Activated CD4-positive, alpha-beta memory T cell treated with anti-CD3 and anti-CD28 coated beads for 36 hours (primary cell): ENCODE measurements at regions of chr9 and their contacts with region 1.

Region 1: GRCh38 chr9:128361986-128362646 is 9.1 kb upstream of the URM1 start:
- DNase-seq: peak; percentile 81
- H3K4me3 Mint-ChIP-seq: peak overlapping the region; percentile 50
- H3K27ac Mint-ChIP-seq: peak overlapping the region; percentile 42
- H3K4me1 Mint-ChIP-seq: peaks cover 9% of the 10 kb centered on the region
- H3K27me3 Mint-ChIP-seq: no peaks in the 10 kb centered on the region

Region 2: GRCh38 chr9:128218518-128219389 is 143.4 kb before region 1 on chr9:
- CTCF ChIA-PET with region 1: no interaction called
- POLR2A ChIA-PET with region 1: no interaction called
- intact Hi-C with region 1: no loop called
- DNase-seq: peak; percentile 99
- H3K4me3 Mint-ChIP-seq: peak overlapping the region; percentile 70
- H3K27ac Mint-ChIP-seq: no peak overlapping the region
- H3K4me1 Mint-ChIP-seq: peaks cover 11% of the 10 kb centered on the region
- H3K27me3 Mint-ChIP-seq: peaks cover 3% of the 10 kb centered on the region

Region 3: DNA sequence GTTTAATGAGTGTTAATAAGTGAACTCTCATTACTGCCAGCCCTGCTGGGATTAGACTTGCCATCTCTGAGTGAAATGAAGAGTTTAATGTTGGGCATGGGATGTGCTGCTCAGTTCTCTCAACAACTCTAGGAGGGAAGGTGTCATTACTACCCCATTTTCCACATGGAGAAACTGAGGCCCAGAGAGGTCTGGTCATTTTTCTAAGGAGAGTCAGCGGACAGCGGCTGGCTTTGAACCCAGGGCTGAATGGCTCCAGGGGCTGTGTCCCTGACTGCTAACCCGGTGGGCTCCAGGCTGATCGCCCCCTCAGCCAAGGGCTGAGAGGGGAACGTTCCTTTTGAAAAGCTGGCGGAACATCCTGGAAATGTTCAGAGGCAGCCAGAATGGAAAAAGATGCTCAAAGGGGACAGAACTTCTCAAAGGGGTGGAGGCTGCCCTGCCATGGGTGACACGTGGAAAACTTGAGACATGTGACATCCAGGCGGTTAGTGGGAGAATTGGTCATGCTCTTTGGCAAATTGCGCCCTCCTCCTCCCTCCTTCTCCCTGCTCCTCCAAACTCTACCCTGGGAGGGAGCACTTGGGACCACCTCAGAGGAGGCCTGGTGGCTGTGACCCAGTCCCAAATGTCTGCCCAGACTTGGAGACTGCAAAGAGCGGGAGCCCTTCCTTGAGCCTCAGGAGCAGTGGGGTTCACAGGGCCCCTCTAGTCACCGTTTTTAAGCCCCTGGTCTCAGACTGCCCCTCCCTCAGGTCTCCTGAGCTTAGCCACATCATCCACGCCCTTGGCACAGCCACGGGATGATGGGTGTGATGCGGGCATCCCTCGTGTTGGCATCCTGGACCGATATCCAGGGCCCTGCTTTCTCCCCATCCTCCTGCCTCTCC is 130.2 kb before region 1 on chr9:
- CTCF ChIA-PET with region 1: no interaction called
- POLR2A ChIA-PET with region 1: no interaction called
- intact Hi-C with region 1: no loop called
- DNase-seq: peak; percentile 24
- H3K4me3 Mint-ChIP-seq: no peak overlapping the region
- H3K27ac Mint-ChIP-seq: no peak overlapping the region
- H3K4me1 Mint-ChIP-seq: no peaks in the 10 kb centered on the region
- H3K27me3 Mint-ChIP-seq: no peaks in the 10 kb centered on the region

Region 4: DNA sequence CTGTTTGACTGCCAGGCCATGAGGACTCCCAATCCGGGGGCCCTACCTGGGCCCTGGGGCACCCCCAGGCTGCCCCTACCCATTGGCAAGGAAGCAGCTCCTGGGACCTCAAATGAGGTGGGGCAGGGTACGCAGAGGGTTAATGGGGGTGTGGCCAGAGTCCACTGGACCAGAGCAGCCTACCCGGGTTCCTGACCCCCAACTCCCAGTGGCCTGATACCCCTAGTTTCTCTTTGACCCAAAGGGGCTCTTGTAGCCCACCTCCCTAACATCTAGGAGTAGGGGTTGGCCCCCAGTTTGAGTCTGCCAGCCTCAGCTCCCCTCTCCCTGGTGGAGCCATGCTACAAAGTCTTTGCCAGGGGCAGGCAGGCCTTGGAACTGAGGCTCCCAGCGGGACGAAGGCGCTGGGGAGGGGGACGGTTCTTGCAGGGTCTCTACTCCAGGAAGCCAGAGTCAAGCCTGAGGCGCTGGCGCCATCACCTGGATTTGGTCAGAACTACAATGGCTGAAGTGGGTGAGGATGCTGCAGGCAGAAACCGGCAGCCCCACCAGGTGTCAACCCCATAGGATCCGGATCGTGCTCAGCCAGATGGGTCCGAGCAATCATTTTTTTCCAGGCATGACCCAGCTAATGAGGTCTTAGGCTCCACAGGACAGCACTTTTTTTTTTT is 50.1 kb after region 1 on chr9:
- CTCF ChIA-PET with region 1: interaction called, 38 read pairs
- POLR2A ChIA-PET with region 1: no interaction called
- intact Hi-C with region 1: loop called (anchors 1 kb)
- DNase-seq: peak; percentile 72
- H3K4me3 Mint-ChIP-seq: no peak overlapping the region
- H3K27ac Mint-ChIP-seq: no peak overlapping the region
- H3K4me1 Mint-ChIP-seq: no peaks in the 10 kb centered on the region
- H3K27me3 Mint-ChIP-seq: peaks cover 38% of the 10 kb centered on the region

Region 5: GRCh38 chr9:128420060-128420650 is 58.0 kb after region 1 on chr9:
- CTCF ChIA-PET with region 1: interaction called, 31 read pairs
- POLR2A ChIA-PET with region 1: no interaction called
- intact Hi-C with region 1: no loop called
- DNase-seq: peak; percentile 78
- H3K4me3 Mint-ChIP-seq: peak overlapping the region; percentile 69
- H3K27ac Mint-ChIP-seq: no peak overlapping the region
- H3K4me1 Mint-ChIP-seq: peaks cover 9% of the 10 kb centered on the region
- H3K27me3 Mint-ChIP-seq: peaks cover 28% of the 10 kb centered on the region

Region 6: DNA sequence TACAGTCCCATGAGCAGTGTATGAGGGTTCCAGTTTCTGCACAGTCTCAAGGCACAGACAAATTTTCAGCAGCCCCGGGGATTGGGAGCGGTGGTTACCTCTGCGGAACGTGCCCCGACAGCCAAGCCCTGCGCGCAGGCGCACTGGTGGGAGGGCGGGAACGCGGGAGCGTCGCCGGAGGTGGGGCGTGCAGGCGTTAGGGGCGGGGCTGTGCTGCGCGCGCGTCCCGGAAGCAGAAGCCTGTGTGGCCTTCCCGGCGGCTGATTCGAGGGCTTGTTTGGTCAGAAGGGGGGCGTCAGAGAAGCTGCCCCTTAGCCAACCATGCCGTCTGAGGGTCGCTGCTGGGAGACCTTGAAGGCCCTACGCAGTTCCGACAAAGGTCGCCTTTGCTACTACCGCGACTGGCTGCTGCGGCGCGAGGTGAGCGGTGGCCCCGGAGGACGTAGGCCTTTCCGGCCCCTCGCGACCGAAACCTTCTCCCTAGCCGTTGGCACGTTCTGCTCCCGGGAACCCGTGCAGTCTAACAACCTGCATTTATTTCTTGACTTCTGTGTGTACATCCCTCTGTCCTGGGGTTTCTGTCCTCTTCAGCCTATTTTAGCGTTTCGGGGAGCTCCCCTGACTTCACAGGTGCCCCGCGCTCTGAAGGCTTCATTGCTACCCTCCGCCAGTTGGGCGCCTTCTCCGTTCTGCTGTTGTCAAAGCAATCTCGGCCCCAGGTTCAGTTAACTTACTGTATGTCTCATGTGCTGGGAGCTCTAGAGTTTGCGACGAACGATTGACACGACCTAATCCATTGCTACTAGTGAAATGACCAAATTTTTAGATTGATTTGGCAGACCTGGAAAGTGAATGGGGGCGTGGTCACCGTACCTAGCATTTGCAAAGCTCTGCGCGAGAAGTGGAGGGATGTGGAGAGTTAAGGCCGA is 142.6 kb after region 1 on chr9 and contains the start of gene GLE1:
- CTCF ChIA-PET with region 1: interaction called, 3 read pairs
- POLR2A ChIA-PET with region 1: no interaction called
- intact Hi-C with region 1: loop called (anchors 2 kb)
- DNase-seq: peak; percentile 97
- H3K4me3 Mint-ChIP-seq: peak within 1 kb of the TSS; percentile 99
- H3K27ac Mint-ChIP-seq: peak within 1 kb of the TSS; percentile 97
- H3K4me1 Mint-ChIP-seq: peaks cover 26% of the 10 kb centered on the region
- H3K27me3 Mint-ChIP-seq: no peaks in the 10 kb centered on the region
- total RNA-seq, gene GLE1: 55.6 to 57.0 TPM

Region 7: DNA sequence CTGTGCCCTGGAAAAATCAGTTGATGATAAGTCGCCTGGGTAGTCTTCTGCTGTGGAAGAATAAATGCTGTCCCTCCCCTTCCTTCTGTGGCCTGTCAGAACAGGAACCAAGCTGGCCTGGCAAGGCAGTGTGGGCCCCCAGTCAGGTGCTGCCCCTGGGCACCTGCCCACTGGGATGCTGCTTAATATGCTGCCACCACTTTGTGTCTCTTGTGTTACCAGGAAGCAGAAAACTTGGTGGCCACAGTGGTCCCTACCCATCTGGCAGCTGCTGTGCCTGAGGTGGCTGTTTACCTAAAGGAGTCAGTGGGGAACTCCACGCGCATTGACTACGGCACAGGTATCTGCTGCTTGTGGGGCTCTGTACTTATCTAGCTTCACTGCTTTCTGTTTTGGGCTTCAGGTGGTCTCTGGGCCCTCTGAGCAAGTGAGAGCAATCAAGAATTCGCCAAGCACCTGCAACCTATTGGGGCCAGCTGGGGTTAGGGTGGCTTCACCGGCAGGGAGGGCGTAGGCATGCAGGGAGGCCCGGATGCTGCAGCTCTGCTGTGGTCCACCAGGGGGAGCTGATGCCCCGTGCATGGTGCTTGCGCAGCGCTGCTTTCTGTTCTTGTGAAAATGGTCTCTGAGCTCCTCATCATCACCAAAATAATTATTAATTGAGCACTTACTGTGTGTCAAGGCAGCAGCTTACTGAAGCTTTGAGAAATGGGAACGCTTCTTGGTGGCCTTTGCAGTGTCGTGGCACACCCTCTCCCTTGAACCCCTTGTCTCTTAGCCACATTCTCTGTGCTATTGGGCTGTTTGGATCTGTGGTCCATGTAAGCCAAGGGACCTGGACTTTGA is 769.4 kb after region 1 on chr9:
- CTCF ChIA-PET with region 1: no interaction called
- POLR2A ChIA-PET with region 1: no interaction called
- intact Hi-C with region 1: no loop called
- DNase-seq: peak; percentile 89
- H3K4me3 Mint-ChIP-seq: no peak overlapping the region
- H3K27ac Mint-ChIP-seq: no peak overlapping the region
- H3K4me1 Mint-ChIP-seq: peaks cover 4% of the 10 kb centered on the region
- H3K27me3 Mint-ChIP-seq: no peaks in the 10 kb centered on the region